ENCODE measurements at regions of chr1 and their contacts with region 1.

Region 1: GRCh38 chr1:20682571-20683236 is 21.5 kb upstream of the DDOST start:
- DNase-seq: no peak
- H3K4me3 ChIP-seq: no peak overlapping the region
- H3K27ac ChIP-seq: no peak overlapping the region
- H3K4me1 ChIP-seq: no peaks in the 10 kb centered on the region
- H3K27me3 ChIP-seq: no peaks in the 10 kb centered on the region
- CTCF ChIP-seq: no peak
- EP300 ChIP-seq: no peak
- POLR2A ChIP-seq: no peak

Region 2: DNA sequence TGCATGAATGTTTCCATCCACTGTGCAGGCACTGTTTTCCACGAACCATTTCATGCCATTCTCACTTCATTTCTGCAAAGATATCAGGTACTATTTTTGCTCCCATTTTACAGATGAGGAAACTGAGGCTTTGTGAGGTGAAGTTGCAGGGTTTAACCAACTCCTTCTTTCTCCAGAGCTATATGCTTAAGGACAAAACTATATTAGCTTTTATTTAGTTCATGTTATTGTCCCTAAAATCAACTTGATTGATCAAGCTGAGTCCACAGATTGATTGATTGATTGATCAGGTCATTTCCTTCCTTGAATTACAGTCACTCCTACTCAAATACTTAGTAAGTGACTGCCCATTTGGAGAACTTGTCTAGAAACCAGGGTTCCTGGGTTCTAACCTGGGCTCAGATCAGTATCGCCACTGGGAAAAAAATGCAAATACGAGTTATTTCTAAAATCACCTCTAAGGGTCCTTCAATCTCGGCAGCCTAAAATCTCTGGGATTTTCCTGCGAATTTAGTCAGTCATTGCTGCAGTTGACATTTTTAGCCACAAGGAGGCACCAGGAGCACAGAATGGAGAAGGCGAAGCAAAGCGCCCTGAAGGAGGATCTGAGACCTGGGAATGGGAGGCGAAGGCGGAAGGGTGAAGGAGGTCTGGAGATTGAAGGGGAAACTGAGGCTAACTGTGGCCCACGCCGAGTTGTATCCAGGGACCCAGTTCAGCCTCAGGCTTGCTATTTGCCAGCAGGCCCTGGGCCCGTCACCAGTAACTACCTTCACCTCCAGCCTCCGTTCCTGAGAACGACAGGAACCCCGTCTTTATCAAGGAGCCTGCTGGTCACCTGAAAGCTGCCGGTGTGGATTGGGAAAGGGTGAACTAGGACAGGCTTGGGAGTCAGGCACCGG is 160.5 kb before region 1 on chr1:
- intact Hi-C with region 1: no loop called
- DNase-seq: peak; percentile 75 to 88 (median 80)
- H3K4me3 ChIP-seq: no peak overlapping the region
- H3K27ac ChIP-seq: no peak overlapping the region
- H3K4me1 ChIP-seq: no peaks in the 10 kb centered on the region
- H3K27me3 ChIP-seq: no peaks in the 10 kb centered on the region
- CTCF ChIP-seq: peak; percentile 80 to 85 (median 82)
- EP300 ChIP-seq: no peak
- POLR2A ChIP-seq: no peak

Region 3: GRCh38 chr1:20633190-20634064 is 49.3 kb before region 1 on chr1 and contains the start of gene PINK1:
- intact Hi-C with region 1: no loop called
- DNase-seq: peak; percentile 74 to 93 (median 80)
- H3K4me3 ChIP-seq: peak within 1 kb of the TSS; percentile 77
- H3K27ac ChIP-seq: peak within 1 kb of the TSS; percentile 59 to 86
- H3K4me1 ChIP-seq: peaks cover 4% of the 10 kb centered on the region
- H3K27me3 ChIP-seq: no peaks in the 10 kb centered on the region
- CTCF ChIP-seq: peak; percentile 95 to 97 (median 97)
- EP300 ChIP-seq: no peak
- POLR2A ChIP-seq: no peak
- total RNA-seq, gene PINK1: 40.8 to 70.5 (median 59.4) TPM

Region 4: DNA sequence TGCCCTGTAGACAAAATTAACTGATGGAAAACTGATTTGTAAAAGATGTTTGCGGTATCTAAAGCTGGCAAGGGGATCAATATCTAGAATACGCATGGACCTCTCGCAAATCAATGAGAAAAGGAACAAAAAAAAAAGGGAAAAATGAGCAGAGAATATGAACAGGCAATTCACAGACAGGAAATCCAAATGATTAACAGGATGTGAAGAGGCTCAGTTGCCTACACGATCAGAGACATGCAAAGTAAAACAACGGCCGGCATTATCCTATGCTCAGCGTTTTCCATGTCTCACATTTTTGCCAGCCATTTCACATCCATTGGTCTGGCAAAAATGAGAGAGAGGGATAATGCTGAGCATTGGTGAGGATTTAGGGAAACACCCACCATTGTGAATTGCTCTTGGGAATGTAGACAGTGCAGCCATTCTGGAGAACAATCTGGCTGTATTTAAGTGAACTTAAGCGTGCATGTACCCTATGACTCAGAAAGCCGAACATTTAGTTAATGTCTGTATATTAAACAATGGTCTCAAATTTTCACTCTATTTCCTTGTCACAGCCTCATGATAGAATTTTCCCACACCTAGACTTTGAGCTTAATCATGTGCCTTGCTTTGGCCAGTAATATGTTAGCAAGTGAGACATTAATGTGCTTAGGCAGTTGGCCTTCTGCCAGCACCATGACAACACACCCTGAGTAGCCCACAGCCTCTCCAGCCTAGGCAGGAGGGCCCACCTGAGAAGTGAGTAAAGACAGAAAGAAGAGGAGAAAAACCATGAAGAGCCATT is 696.2 kb after region 1 on chr1:
- intact Hi-C with region 1: loop called in 1 of 4 experiments (anchors 10 kb)
- DNase-seq: no peak
- H3K4me3 ChIP-seq: no peak overlapping the region
- H3K27ac ChIP-seq: no peak overlapping the region
- H3K4me1 ChIP-seq: no peaks in the 10 kb centered on the region
- H3K27me3 ChIP-seq: no peaks in the 10 kb centered on the region
- CTCF ChIP-seq: no peak
- EP300 ChIP-seq: no peak
- POLR2A ChIP-seq: no peak

Region 5: DNA sequence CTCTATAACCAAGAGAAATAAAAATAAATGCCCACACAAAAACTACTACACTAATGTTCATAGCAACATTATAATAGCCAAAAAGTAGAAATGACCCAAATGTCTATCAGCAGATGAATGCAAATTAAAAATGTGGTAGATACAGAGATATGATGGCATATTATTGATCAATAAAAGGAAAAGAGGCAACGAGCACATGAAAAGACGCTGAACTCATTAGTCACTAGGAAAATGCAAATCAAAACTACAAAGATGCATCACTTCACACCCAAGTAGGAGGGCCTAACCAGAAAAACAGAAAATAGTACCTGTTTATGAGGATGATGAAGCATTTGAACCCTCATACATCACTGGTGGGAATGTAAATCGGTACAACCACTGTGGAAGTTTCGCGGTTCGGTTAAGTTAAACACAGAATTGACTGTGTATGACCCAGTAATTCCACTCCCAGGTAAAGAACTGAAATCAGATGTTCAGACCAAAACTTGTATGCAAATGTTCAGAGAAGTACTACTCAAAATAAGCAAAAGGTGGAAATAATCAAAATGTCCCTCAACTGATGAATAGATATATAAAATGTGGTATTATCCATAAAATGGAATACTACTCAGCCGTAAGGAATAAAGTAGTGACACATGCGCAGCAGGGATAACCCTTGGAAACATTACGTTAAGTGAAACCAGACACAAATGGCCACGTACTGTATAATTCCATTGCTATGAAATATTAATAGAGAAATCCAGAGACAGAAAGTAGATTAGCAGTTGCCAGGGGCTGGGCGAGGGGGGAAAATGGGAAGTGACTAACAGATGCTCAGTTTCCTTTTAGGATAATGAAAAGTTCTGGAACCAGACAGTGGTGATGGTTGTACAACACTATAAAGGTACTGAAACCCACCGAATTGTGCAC is 1097.2 kb after region 1 on chr1:
- intact Hi-C with region 1: no loop called
- DNase-seq: no peak
- H3K4me3 ChIP-seq: no peak overlapping the region
- H3K27ac ChIP-seq: no peak overlapping the region
- H3K4me1 ChIP-seq: peaks cover 4% of the 10 kb centered on the region
- H3K27me3 ChIP-seq: no peaks in the 10 kb centered on the region
- CTCF ChIP-seq: no peak
- EP300 ChIP-seq: no peak
- POLR2A ChIP-seq: no peak